ENCODE measurements at regions of chr1 and their contacts with region 1.

Region 1: DNA sequence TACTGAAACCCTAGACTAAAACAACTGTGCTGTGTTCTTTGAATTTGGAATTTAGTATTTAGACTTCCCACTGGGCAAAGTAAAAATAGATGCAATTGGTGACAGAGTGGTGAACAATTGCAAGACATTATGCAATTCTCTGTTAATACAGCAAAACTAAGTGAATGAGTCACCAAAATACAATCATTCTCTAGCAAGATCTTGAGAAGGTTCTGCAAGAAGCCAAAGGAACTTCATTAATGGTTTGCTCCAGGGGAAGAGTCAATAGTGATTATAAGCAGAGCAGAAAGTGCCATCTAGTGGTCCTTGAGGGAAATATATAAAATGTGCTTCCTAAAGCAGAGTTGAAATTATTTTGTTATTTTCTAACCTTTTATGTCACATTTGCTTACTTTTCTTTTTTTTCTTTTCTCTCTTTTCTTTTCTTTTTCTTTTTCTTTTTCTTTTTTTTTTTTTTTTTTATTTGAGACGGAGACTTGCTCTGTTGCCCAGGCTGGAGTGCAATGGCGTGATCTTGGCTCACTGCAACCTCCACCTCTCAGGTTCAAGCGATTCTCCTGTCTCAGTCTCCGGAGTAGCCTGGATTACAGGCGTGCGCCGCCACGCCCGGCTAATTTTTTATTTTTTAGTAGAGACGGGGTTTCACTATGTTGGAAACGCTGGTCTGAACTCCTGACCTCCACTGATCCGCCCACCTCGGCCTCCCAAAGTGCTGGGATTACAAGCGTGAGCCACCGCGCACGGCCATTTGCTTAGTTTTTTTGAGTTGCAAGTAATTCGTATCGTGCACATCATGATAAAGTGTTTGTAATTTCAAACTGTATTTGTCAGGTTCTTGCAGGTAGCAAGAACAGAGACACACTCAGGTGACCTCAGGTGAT is 99.2 kb downstream of the CTH start:
- DNase-seq: no peak
- ATAC-seq: peak; percentile 86
- H3K4me3 Mint-ChIP-seq: no peak overlapping the region
- H3K27ac Mint-ChIP-seq: no peak overlapping the region
- H3K4me1 Mint-ChIP-seq: no peaks in the 10 kb centered on the region
- H3K27me3 Mint-ChIP-seq: peaks cover 10% of the 10 kb centered on the region

Region 2: DNA sequence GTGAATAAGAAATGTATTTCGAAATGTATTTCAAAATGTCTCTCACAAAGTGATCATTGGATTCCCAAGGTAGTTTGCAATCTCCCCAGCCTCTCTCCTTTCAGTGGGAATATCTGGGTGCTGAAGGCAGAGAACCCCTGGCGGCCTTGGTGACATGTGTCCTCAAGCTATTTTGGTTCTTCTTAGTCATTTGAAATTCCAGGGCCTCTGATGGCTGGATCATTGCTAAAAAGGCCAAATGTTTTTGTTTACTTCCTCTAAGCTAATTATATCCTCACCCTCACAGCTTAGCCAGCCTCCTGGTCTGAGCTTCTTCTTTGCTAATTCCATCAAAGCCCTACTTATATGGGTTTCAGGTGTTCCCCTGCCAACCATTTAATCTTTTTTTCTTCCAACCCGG is 376.1 kb before region 1 on chr1:
- CTCF ChIA-PET with region 1: interaction called, 10 read pairs
- POLR2A ChIA-PET with region 1: no interaction called
- intact Hi-C with region 1: loop called (anchors 1 kb)
- DNase-seq: no peak
- ATAC-seq: no peak
- H3K4me3 Mint-ChIP-seq: no peak overlapping the region
- H3K27ac Mint-ChIP-seq: no peak overlapping the region
- H3K4me1 Mint-ChIP-seq: no peaks in the 10 kb centered on the region
- H3K27me3 Mint-ChIP-seq: no peaks in the 10 kb centered on the region

Region 3: GRCh38 chr1:70256664-70257063 is 253.6 kb before region 1 on chr1:
- CTCF ChIA-PET with region 1: no interaction called
- POLR2A ChIA-PET with region 1: no interaction called
- intact Hi-C with region 1: loop called in 1 of 2 experiments (anchors 10 kb)
- DNase-seq: no peak
- ATAC-seq: no peak
- H3K4me3 Mint-ChIP-seq: no peak overlapping the region
- H3K27ac Mint-ChIP-seq: no peak overlapping the region
- H3K4me1 Mint-ChIP-seq: no peaks in the 10 kb centered on the region
- H3K27me3 Mint-ChIP-seq: no peaks in the 10 kb centered on the region

Region 4: DNA sequence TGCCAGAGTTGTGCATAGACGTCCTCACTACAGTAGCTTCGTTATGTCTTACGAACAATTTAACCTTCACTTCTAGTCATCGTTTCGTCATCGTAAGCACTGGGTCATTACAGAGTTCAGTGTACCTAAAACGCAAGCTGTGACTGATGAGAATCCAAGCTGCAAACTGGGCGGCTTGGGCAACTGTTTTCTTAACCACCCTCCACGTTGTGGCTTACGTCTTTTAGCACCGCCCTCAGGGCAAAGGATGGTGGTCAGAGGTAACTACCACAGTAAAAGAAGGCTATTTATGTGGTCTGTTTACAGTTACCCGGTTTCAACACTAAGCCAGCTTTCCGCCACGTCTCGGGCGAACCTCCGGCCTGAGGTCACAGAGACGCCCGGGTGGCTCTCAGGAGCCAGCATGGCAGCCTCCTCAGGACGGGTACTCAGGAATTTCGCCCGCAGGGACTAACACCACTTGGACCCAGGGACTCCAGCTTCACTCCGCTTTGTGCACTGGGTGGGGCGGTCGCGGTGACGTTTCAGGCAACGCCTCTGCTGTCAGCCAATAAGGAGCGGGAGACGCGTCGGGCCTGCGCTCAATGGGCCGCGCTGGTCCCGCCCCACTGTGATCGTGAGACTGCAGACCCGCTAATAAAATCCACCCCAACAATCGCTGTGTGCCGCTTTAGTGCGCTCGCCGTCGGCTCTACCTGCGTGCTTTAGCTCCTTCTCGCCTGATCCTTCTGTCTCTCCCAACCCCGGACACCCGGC is 99.5 kb before region 1 on chr1 and contains the start of gene CTH:
- CTCF ChIA-PET with region 1: no interaction called
- POLR2A ChIA-PET with region 1: no interaction called
- intact Hi-C with region 1: loop called in 1 of 2 experiments (anchors 5 kb)
- DNase-seq: peak; percentile 96
- ATAC-seq: peak; percentile 95
- H3K4me3 Mint-ChIP-seq: peak within 1 kb of the TSS; percentile 90
- H3K27ac Mint-ChIP-seq: peak within 1 kb of the TSS; percentile 83
- H3K4me1 Mint-ChIP-seq: peaks cover 13% of the 10 kb centered on the region
- H3K27me3 Mint-ChIP-seq: no peaks in the 10 kb centered on the region
- total RNA-seq, gene CTH: 25.3 to 29.8 TPM

Region 5: GRCh38 chr1:70436622-70437251 is 73.5 kb before region 1 on chr1:
- CTCF ChIA-PET with region 1: no interaction called
- POLR2A ChIA-PET with region 1: no interaction called
- intact Hi-C with region 1: loop called in 1 of 2 experiments (anchors 5 kb)
- DNase-seq: no peak
- ATAC-seq: no peak
- H3K4me3 Mint-ChIP-seq: no peak overlapping the region
- H3K27ac Mint-ChIP-seq: no peak overlapping the region
- H3K4me1 Mint-ChIP-seq: peaks cover 11% of the 10 kb centered on the region
- H3K27me3 Mint-ChIP-seq: no peaks in the 10 kb centered on the region

Region 6: DNA sequence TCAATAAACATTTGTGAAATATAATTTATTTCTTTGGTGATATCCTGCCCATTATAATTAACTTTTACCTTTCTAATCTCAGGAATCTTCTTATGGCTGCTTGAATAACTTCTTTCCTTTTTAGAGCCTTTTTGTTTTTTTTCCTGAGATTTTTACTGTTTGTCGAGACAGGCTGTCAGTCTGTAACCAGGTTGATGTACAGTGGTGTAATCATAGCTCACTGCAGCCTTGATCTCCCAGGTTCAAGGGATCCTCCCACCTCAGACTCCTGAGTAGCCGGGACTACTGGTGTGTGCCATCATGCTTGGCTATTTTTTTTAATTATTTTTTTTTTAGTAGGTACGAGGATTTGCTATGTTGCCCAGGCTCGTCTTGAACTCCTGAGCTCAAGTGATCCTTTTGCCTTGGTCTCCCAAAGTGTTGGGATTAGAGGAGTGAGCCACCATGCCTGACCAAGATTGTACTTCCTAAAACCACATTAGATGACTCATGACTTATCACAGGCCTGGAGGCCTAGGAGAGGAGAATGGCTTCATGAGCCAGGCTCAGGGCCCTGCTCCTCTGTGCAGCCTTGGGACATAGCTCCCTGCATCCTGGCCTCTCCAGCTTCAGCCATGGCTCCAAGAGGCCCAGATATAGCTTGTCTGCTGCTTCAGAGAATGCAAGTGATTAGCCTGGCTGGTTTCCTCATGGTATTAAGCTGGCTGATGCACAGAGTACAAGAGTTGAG is 50.6 kb before region 1 on chr1:
- CTCF ChIA-PET with region 1: no interaction called
- POLR2A ChIA-PET with region 1: interaction called, 10 read pairs
- intact Hi-C with region 1: no loop called
- DNase-seq: no peak
- ATAC-seq: no peak
- H3K4me3 Mint-ChIP-seq: no peak overlapping the region
- H3K27ac Mint-ChIP-seq: no peak overlapping the region
- H3K4me1 Mint-ChIP-seq: no peaks in the 10 kb centered on the region
- H3K27me3 Mint-ChIP-seq: no peaks in the 10 kb centered on the region

Region 7: GRCh38 chr1:70536708-70537366 is 26.6 kb after region 1 on chr1:
- CTCF ChIA-PET with region 1: no interaction called
- POLR2A ChIA-PET with region 1: no interaction called
- intact Hi-C with region 1: no loop called
- DNase-seq: no peak
- ATAC-seq: no peak
- H3K4me3 Mint-ChIP-seq: no peak overlapping the region
- H3K27ac Mint-ChIP-seq: no peak overlapping the region
- H3K4me1 Mint-ChIP-seq: no peaks in the 10 kb centered on the region
- H3K27me3 Mint-ChIP-seq: peaks cover 16% of the 10 kb centered on the region

Region 8: GRCh38 chr1:70752511-70752910 is 242.3 kb after region 1 on chr1:
- CTCF ChIA-PET with region 1: no interaction called
- POLR2A ChIA-PET with region 1: no interaction called
- intact Hi-C with region 1: no loop called
- DNase-seq: no peak
- ATAC-seq: no peak
- H3K4me3 Mint-ChIP-seq: no peak overlapping the region
- H3K27ac Mint-ChIP-seq: no peak overlapping the region
- H3K4me1 Mint-ChIP-seq: no peaks in the 10 kb centered on the region
- H3K27me3 Mint-ChIP-seq: no peaks in the 10 kb centered on the region

Region 9: GRCh38 chr1:70779571-70779970 is 269.3 kb after region 1 on chr1:
- CTCF ChIA-PET with region 1: no interaction called
- POLR2A ChIA-PET with region 1: no interaction called
- intact Hi-C with region 1: no loop called
- DNase-seq: no peak
- ATAC-seq: peak; percentile 16
- H3K4me3 Mint-ChIP-seq: no peak overlapping the region
- H3K27ac Mint-ChIP-seq: no peak overlapping the region
- H3K4me1 Mint-ChIP-seq: no peaks in the 10 kb centered on the region
- H3K27me3 Mint-ChIP-seq: no peaks in the 10 kb centered on the region

Measured in activated CD4-positive, alpha-beta T cell treated with anti-CD3 and anti-CD28 coated beads for 36 hours (primary cell).